Naive thymus-derived CD4-positive, alpha-beta T cell (primary cell): ENCODE measurements at regions of chr9 and their contacts with region 1.

Region 1: DNA sequence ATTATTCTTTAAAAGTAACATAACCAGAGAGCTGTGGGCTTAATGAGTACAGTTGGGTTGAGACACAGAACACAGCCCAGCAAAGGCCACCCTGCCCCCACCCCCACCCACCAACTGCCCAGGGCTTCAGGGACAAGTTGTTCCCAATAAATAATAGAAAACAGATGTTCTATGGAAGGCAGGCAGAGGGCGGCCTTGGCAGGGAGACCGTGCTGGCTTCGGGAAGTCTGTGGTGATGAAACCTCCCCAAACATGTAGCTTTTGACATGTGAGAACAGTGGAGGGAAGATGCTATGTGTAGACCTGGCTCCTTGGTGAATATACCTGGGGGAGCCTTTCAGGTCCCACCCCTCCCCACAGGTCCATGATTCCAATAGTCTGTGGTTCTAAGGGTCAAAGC is 10.0 kb downstream of the TRAF1 start:
- DNase-seq: no peak
- ATAC-seq: no peak
- H3K4me3 ChIP-seq: no peak overlapping the region
- H3K4me3 Mint-ChIP-seq: peak overlapping the region; percentile 60 to 79 (median 74)
- H3K27ac ChIP-seq: peak overlapping the region; percentile 59
- H3K27ac Mint-ChIP-seq: peak overlapping the region; percentile 82 to 95 (median 92)
- H3K4me1 ChIP-seq: peaks cover 72% of the 10 kb centered on the region in 2 donors
- H3K4me1 Mint-ChIP-seq: peaks cover 60 to 92% (median 81%) of the 10 kb centered on the region in 7 donors
- H3K27me3 ChIP-seq: no peaks in the 10 kb centered on the region
- H3K27me3 Mint-ChIP-seq: no peaks in the 10 kb centered on the region

Region 2: DNA sequence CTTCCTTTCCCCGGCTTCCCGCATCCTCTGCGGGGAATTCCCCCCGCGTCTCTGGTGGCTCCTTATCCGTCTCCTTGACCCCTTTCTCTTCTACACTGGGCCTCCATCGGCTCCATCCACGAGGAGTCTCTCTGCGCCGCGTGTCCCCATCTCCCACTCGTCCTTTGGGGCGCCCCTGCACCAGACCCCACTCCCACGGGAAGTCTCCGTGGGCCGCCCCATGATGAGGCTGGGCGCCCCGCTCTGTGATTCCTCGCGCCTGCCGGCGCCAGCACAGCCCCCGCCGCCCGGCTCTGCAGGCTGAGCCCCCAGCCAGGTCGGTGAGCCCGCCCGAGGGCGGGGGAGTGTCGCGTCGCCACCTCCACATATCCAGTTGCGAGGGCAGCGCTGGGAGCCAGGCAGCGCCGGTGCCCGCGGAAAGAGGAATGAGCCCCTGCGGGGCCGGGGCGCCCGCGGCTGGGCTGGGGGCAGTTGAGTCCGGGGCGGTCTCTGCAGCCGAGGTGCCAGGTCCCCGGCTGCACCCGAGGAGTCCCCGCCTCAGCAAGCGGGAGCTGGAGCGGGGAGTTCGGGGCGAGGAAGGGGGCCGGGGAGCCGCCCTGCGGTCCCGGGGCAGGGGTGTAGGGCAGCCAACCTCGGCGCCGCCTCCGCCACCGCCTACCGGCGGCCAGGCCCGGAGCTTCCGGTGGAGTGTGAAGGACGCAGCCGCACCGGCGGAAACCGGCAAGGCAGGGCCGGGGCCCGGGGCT is 12.1 kb after region 1 on chr9:
- CTCF ChIA-PET with region 1: interaction called, 10 read pairs
- POLR2A ChIA-PET with region 1: interaction called, 2,417 read pairs
- intact Hi-C with region 1: loop called (anchors 1 kb)
- DNase-seq: peak; percentile 63 to 86 (median 74)
- ATAC-seq: peak; percentile 58
- H3K4me3 ChIP-seq: peak overlapping the region; percentile 79
- H3K4me3 Mint-ChIP-seq: peak overlapping the region; percentile 90 to 100 (median 96)
- H3K27ac ChIP-seq: peak overlapping the region; percentile 97
- H3K27ac Mint-ChIP-seq: peak overlapping the region; percentile 95 to 100 (median 99)
- H3K4me1 ChIP-seq: peaks cover 62 to 84% of the 10 kb centered on the region in 2 donors
- H3K4me1 Mint-ChIP-seq: peaks cover 57 to 95% (median 86%) of the 10 kb centered on the region in 7 donors
- H3K27me3 ChIP-seq: no peaks in the 10 kb centered on the region
- H3K27me3 Mint-ChIP-seq: no peaks in the 10 kb centered on the region

Region 3: DNA sequence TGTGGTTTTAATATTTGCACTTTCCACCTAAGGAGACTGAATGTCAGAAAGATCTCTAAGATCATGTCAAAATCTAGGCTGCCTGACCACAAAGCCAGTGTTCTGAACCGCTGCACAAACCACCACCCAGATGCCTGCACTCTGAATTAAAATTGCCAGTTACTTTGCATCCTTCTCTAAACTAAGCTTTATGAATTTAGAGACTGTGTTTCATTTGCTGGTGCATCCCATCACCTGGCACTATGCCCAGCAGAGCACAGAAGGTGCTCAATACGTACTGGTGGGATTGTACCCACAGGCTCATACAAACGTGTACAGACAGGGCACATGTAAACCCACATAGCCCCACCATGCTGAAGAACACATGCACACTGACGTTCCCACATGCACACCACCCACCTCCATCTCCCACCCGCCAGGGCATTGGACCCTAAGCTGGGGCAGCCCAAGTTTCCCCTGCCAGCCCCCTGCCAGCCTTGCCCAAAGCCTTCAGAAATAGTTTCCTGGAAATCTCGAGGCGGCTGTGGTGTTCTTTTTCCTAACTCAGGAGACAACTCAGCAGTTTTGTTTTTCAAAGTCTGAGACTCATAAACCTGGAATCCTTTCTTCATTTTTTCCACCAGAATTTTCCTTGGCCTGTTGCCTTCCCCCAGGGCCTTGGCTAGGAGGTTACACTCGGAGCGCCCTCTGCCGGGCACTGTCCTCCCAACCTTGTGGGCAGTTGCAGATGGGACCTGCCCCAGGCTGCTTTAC is 19.6 kb after region 1 on chr9:
- CTCF ChIA-PET with region 1: interaction called, 17 read pairs
- POLR2A ChIA-PET with region 1: interaction called, 2,417 read pairs
- intact Hi-C with region 1: no loop called
- DNase-seq: peak; percentile 71 to 89 (median 82)
- ATAC-seq: peak; percentile 85
- H3K4me3 ChIP-seq: peak overlapping the region; percentile 21
- H3K4me3 Mint-ChIP-seq: peak overlapping the region; percentile 33 to 77 (median 62)
- H3K27ac ChIP-seq: peak overlapping the region; percentile 97
- H3K27ac Mint-ChIP-seq: peak overlapping the region; percentile 88 to 100 (median 98)
- H3K4me1 ChIP-seq: peaks cover 61% of the 10 kb centered on the region in 2 donors
- H3K4me1 Mint-ChIP-seq: peaks cover 31 to 71% (median 63%) of the 10 kb centered on the region in 7 donors
- H3K27me3 ChIP-seq: no peaks in the 10 kb centered on the region
- H3K27me3 Mint-ChIP-seq: peaks cover 0 to 2% (median 0%) of the 10 kb centered on the region in 5 donors

Region 4: GRCh38 chr9:121861501-121862180 is 945.1 kb after region 1 on chr9:
- CTCF ChIA-PET with region 1: no interaction called
- POLR2A ChIA-PET with region 1: no interaction called
- intact Hi-C with region 1: no loop called
- DNase-seq: no peak
- ATAC-seq: no peak
- H3K4me3 ChIP-seq: no peak overlapping the region
- H3K4me3 Mint-ChIP-seq: no peak overlapping the region
- H3K27ac ChIP-seq: no peak overlapping the region
- H3K27ac Mint-ChIP-seq: no peak overlapping the region
- H3K4me1 ChIP-seq: no peaks in the 10 kb centered on the region
- H3K4me1 Mint-ChIP-seq: no peaks in the 10 kb centered on the region
- H3K27me3 ChIP-seq: peaks cover 0 to 4% of the 10 kb centered on the region in 2 donors
- H3K27me3 Mint-ChIP-seq: no peaks in the 10 kb centered on the region